ENCODE measurements at regions of chr6 and their contacts with region 1.

Region 1: GRCh38 chr6:116531675-116532570 is 13.6 kb downstream of the TRAPPC3L start:
- DNase-seq: peak in 1 of 3 donors; percentile 81
- ATAC-seq: peak; percentile 80
- H3K4me3 ChIP-seq: no peak overlapping the region
- H3K4me1 ChIP-seq: no peaks in the 10 kb centered on the region
- CTCF ChIP-seq: peak; percentile 62

Region 2: DNA sequence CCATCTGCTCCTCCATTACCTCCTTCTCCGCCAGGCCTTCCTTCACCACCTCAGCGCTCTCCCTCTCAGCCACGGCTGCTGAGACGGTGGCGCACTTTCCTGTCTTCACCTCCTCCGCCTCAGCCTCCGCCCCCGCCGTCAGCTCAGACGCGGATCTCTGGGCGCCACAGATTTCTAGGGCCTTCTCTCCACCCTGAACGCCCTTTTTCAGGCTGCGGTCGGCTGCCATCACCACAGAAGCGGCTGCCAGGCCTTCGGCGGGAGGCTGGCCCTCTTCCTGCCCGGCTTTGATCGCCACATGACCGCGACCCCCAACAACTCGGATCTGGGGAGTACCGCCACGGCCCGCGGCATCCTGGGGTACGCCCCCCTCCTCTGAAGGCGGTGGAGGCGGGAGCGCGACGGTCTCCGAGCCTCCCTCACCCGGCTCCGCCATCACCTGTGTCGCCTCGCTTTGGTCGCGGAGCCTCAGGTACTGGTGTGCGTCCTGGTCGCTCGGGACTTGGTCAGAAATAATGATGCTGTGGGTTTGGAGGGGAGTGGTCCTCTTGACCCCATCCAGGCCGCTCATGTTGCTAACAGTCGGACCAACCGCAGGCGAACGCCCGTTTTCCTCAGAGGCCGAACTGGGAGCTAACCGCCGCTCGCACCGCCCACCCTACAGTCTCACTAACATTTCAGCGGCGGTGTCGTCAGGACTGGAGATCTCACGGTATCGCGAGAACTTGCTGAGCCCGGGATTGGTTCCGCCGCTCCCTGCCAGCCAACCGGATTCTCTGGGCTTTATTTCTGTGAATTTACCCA is 252.5 kb before region 1 on chr6 and contains the start of gene TSPYL1:
- intact Hi-C with region 1: loop called in 1 of 2 experiments (anchors 10 kb)
- DNase-seq: peak; percentile 96 to 98 (median 96)
- ATAC-seq: peak; percentile 98
- H3K4me3 ChIP-seq: peak within 1 kb of the TSS; percentile 89
- H3K4me1 ChIP-seq: peaks cover 29% of the 10 kb centered on the region
- CTCF ChIP-seq: no peak
- total RNA-seq, gene TSPYL1: 65.5 to 105 (median 67.0) TPM

Region 3: DNA sequence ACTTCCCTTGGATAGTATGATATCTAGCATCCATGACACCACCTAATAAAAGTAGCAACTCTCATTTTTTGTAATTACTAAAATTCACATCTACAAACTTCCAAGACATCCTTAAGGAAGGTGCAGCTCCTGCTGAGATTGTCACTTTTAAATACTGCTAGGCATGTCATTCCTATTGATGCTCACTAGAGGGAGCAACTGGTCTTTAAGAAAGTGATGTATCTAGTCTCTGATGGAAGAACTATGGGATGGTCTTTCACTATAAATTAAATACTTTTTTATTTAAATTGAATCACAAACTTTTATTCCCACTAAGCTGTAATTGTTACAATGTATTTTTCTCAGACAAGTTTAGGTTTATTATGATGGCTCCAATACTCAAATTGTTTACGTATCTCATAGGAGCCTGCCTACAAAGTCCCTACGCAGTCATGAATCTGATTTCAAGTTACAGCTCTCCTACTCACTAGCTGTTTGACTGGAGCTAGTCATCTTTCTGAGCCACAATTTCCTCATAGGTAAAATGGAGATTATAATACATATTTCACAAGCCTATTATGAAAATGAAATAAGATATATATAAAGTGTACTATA is 244.1 kb before region 1 on chr6:
- intact Hi-C with region 1: loop called (anchors 5 to 10 kb)
- DNase-seq: no peak
- ATAC-seq: peak; percentile 76
- H3K4me3 ChIP-seq: no peak overlapping the region
- H3K4me1 ChIP-seq: no peaks in the 10 kb centered on the region
- CTCF ChIP-seq: peak; percentile 89

Region 4: DNA sequence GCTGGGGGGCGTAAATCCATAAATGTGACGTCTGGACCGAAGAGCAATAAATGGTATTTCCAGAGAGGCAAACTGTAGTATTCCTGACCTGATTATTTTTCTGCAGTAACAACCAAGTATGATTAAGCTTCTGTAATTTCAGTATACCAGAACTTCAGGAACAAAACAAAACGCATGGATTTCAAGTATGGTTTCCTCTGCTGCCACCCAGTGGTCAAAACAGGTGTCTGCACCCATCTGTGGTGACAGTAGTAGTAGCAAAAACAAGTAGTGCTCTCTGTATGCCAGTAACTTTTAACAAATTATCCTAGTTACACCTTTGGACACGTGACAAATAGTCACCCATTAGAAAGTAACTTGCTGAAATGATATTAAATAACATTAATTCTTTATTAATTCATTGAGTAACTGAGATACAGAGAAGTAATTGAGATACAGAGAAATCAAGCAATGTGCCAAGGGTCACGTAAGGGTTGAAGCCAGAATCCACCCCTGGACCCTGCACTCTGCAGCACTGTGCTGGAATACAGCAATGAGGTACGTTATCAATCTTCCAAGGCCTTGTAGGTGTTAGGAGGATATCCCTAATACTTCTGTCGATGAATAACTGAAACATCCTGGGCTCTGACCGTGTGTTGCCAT is 29.6 kb after region 1 on chr6:
- intact Hi-C with region 1: no loop called
- DNase-seq: peak; percentile 43 to 88 (median 75)
- ATAC-seq: peak; percentile 89
- H3K4me3 ChIP-seq: no peak overlapping the region
- H3K4me1 ChIP-seq: no peaks in the 10 kb centered on the region
- CTCF ChIP-seq: peak; percentile 80

Region 5: DNA sequence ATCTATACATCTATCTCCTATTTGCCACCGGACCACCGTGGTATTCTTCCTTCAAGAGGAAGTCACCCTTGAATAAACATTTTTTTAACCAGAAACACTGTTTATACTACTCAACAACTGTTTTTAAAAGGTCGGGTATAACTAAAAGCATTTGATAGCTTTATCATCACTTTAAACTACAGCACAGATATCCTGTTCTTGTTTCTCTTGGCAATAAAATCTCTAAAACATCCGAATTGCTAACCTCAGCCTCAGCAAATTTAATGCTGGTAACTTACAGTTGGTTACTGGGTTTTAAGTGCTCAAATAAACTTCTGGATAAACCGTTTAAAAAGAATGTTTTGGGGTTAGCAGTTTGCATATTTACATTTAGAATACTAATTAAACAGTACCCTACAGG is 116.2 kb after region 1 on chr6:
- intact Hi-C with region 1: loop called in 1 of 2 experiments (anchors 5 kb)
- DNase-seq: no peak
- ATAC-seq: no peak
- H3K4me3 ChIP-seq: no peak overlapping the region
- H3K4me1 ChIP-seq: no peaks in the 10 kb centered on the region
- CTCF ChIP-seq: no peak

Measured in mucosa of descending colon (tissue), 3 donors.